GM10248 (cell line): ENCODE measurements at regions of chr17 and their contacts with region 1.

Region 1: DNA sequence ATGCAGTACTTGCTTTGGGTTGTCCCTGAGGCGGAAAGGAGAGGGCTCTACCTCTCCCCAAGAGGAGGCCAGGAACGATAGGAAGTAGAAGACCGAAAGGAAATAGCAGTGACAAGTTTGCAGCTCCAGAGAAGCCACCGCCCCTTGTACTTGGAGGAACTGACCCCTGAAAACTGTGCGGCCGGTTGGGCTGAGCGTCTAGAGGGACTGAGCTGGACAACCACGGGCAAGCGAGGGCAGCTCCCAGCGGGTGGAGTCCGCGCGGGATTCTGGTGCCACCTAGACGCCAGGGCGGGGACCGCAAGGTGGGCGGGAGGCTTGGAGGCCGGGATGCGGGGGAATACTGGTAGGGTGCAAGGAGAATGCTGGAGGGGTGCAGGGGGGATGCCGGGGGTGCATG is 1.3 kb upstream of the SLC6A4 start:
- DNase-seq: peak; percentile 73
- CTCF ChIP-seq: peak; percentile 39

Region 2: GRCh38 chr17:30212750-30213149 is 24.0 kb before region 1 on chr17:
- CTCF ChIA-PET with region 1: interaction called, 12 read pairs
- POLR2A ChIA-PET with region 1: no interaction called
- DNase-seq: peak; percentile 79
- CTCF ChIP-seq: no peak

Region 3: GRCh38 chr17:30218799-30219198 is 18.0 kb before region 1 on chr17:
- CTCF ChIA-PET with region 1: interaction called, 38 read pairs
- POLR2A ChIA-PET with region 1: no interaction called
- DNase-seq: peak; percentile 58
- CTCF ChIP-seq: peak; percentile 4

Region 4: GRCh38 chr17:30344283-30345088 is 107.7 kb after region 1 on chr17:
- CTCF ChIA-PET with region 1: no interaction called
- POLR2A ChIA-PET with region 1: no interaction called
- DNase-seq: no peak
- CTCF ChIP-seq: no peak